IMR-90 (cell line): ENCODE measurements at regions of chr1 and their contacts with region 1.

Region 1: GRCh38 chr1:205528887-205529825 is 24.7 kb downstream of the CDK18 start:
- DNase-seq: peak; percentile 50
- ATAC-seq: peak; percentile 95
- H3K4me3 ChIP-seq: no peak overlapping the region
- H3K27ac ChIP-seq: no peak overlapping the region
- H3K4me1 ChIP-seq: no peaks in the 10 kb centered on the region
- H3K27me3 ChIP-seq: peaks cover 26% of the 10 kb centered on the region
- CTCF ChIP-seq: peak; percentile 85
- POLR2A ChIP-seq: no peak
- RAD21 ChIP-seq: peak; percentile 89

Region 2: GRCh38 chr1:205631727-205632373 is 102.7 kb after region 1 on chr1 and contains the start of gene ELK4:
- CTCF ChIA-PET with region 1: interaction called, 4 read pairs
- POLR2A ChIA-PET with region 1: no interaction called
- dilution Hi-C with region 1: no loop called
- in situ Hi-C with region 1: no loop called
- intact Hi-C with region 1: loop called (anchors 1 kb)
- DNase-seq: peak; percentile 98
- ATAC-seq: peak; percentile 92
- H3K4me3 ChIP-seq: peak within 1 kb of the TSS; percentile 99
- H3K27ac ChIP-seq: peak within 1 kb of the TSS; percentile 98
- H3K4me1 ChIP-seq: peaks cover 4% of the 10 kb centered on the region
- H3K27me3 ChIP-seq: no peaks in the 10 kb centered on the region
- CTCF ChIP-seq: peak; percentile 86
- POLR2A ChIP-seq: peak; percentile 95
- RAD21 ChIP-seq: peak; percentile 79
- total RNA-seq, gene ELK4: 11.3 and 15.6 TPM in 2 replicates

Region 3: DNA sequence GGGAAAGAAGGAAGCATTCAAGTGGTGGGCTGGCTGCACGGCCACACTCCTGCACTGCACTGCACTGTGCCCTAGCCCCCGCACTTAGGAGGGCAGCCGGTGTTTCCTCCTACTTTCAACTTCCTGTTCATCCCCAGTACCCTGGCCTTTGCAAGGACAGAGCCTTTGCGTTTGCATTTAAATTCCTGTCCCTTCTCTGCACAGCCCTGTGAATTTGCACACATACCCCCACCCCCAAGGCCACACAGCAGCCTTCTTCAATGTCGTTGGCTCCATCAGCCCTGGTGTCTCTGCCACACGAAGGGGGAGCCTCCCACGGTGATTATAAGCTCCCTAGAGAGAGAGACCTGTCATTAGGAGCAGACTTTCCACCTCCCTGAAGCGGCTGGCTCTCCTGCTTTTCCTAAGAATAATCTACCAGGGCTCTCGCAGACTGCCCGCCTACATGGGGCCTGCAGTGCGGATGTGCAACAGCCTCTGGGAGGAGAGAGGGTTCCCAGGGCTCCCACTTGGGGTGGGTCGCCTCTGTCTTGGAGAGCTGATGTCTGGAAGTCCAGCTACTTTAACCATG is 164.3 kb after region 1 on chr1:
- CTCF ChIA-PET with region 1: no interaction called
- POLR2A ChIA-PET with region 1: no interaction called
- dilution Hi-C with region 1: no loop called
- in situ Hi-C with region 1: no loop called
- intact Hi-C with region 1: no loop called
- DNase-seq: no peak
- ATAC-seq: no peak
- H3K4me3 ChIP-seq: no peak overlapping the region
- H3K27ac ChIP-seq: no peak overlapping the region
- H3K4me1 ChIP-seq: no peaks in the 10 kb centered on the region
- H3K27me3 ChIP-seq: peaks cover 15% of the 10 kb centered on the region
- CTCF ChIP-seq: no peak
- POLR2A ChIP-seq: no peak
- RAD21 ChIP-seq: no peak

Region 4: GRCh38 chr1:205711104-205712020 is 182.2 kb after region 1 on chr1:
- CTCF ChIA-PET with region 1: interaction called, 4 read pairs
- POLR2A ChIA-PET with region 1: no interaction called
- dilution Hi-C with region 1: no loop called
- in situ Hi-C with region 1: no loop called
- intact Hi-C with region 1: loop called (anchors 2 kb)
- DNase-seq: peak; percentile 86
- ATAC-seq: peak; percentile 78
- H3K4me3 ChIP-seq: no peak overlapping the region
- H3K27ac ChIP-seq: no peak overlapping the region
- H3K4me1 ChIP-seq: peaks cover 8% of the 10 kb centered on the region
- H3K27me3 ChIP-seq: no peaks in the 10 kb centered on the region
- CTCF ChIP-seq: peak; percentile 93
- POLR2A ChIP-seq: no peak
- RAD21 ChIP-seq: peak; percentile 88

Region 5: DNA sequence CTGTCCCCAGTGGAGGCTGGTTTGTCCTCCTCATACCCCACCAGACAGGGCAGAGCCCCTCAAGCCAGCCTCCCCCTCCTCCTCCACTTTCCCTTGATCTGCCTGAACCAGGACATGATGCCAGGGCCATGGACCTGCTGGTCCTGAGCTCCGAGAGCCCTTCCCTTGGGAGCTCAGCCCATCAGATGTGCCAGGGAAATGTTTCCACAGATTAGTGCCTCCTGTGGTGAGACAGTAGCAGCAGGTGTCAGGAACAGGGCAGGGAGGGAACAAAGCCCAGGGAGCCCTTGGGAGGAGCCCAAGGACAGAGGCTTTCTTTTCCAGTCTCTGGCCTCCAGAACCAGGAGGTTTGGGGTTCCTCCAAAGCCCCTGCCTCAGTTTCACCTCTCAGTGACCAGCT is 298.5 kb after region 1 on chr1:
- CTCF ChIA-PET with region 1: no interaction called
- POLR2A ChIA-PET with region 1: no interaction called
- dilution Hi-C with region 1: no loop called
- in situ Hi-C with region 1: no loop called
- intact Hi-C with region 1: no loop called
- DNase-seq: no peak
- ATAC-seq: no peak
- H3K4me3 ChIP-seq: no peak overlapping the region
- H3K27ac ChIP-seq: no peak overlapping the region
- H3K4me1 ChIP-seq: no peaks in the 10 kb centered on the region
- H3K27me3 ChIP-seq: peaks cover 43% of the 10 kb centered on the region
- CTCF ChIP-seq: no peak
- POLR2A ChIP-seq: no peak
- RAD21 ChIP-seq: no peak